A549 (cell line): ENCODE measurements at regions of chr12 and their contacts with region 1.

Region 1: GRCh38 chr12:49018261-49019119 is at the start of gene PRKAG1:
- DNase-seq: peak; percentile 98
- ATAC-seq: peak; percentile 87 to 92
- H3K4me3 ChIP-seq: peak within 1 kb of the TSS; percentile 83
- H3K27ac ChIP-seq: peak within 1 kb of the TSS; percentile 92 to 93
- H3K4me1 ChIP-seq: peaks cover 22% of the 10 kb centered on the region
- CTCF ChIP-seq: peak; percentile 59
- EP300 ChIP-seq: no peak
- POLR2A ChIP-seq: peak; percentile 77
- RAD21 ChIP-seq: peak; percentile 18 to 28; a peak in 1 of 5 replicates
- polyA plus RNA-seq, gene PRKAG1: 100 and 117 TPM in 2 replicates

Region 2: GRCh38 chr12:48957141-48958048 is 61.1 kb before region 1 on chr12 and contains the start of gene ARF3:
- CTCF ChIA-PET with region 1: interaction called, 2,584 read pairs
- POLR2A ChIA-PET with region 1: interaction called, 3 read pairs
- DNase-seq: peak; percentile 95 to 96
- ATAC-seq: peak; percentile 87 to 94
- H3K4me3 ChIP-seq: peak within 1 kb of the TSS; percentile 79
- H3K27ac ChIP-seq: peak within 1 kb of the TSS; percentile 95
- H3K4me1 ChIP-seq: peaks cover 10% of the 10 kb centered on the region
- CTCF ChIP-seq: no peak
- EP300 ChIP-seq: no peak
- POLR2A ChIP-seq: peak; percentile 68
- RAD21 ChIP-seq: no peak
- polyA plus RNA-seq, gene ARF3: 281 and 287 TPM in 2 replicates

Region 3: GRCh38 chr12:48977315-48978281 is 40.9 kb before region 1 on chr12:
- CTCF ChIA-PET with region 1: interaction called, 2,584 read pairs
- POLR2A ChIA-PET with region 1: no interaction called
- DNase-seq: peak; percentile 64 to 74
- ATAC-seq: peak; percentile 69 to 85
- H3K4me3 ChIP-seq: peak overlapping the region; percentile 42; the same call in 2 of the 3 replicates
- H3K27ac ChIP-seq: 0 out of 6 replicates have a peak overlapping the region, but pooled peaks of 1 of the 2 experiments have one; percentile 31
- H3K4me1 ChIP-seq: peaks cover 16% of the 10 kb centered on the region; the same call in 2 of the 3 replicates
- CTCF ChIP-seq: peak; percentile 70
- EP300 ChIP-seq: no peak
- POLR2A ChIP-seq: no peak
- RAD21 ChIP-seq: peak in 1 of 2 experiments; percentile 39; a peak in 3 of 5 replicates

Region 4: DNA sequence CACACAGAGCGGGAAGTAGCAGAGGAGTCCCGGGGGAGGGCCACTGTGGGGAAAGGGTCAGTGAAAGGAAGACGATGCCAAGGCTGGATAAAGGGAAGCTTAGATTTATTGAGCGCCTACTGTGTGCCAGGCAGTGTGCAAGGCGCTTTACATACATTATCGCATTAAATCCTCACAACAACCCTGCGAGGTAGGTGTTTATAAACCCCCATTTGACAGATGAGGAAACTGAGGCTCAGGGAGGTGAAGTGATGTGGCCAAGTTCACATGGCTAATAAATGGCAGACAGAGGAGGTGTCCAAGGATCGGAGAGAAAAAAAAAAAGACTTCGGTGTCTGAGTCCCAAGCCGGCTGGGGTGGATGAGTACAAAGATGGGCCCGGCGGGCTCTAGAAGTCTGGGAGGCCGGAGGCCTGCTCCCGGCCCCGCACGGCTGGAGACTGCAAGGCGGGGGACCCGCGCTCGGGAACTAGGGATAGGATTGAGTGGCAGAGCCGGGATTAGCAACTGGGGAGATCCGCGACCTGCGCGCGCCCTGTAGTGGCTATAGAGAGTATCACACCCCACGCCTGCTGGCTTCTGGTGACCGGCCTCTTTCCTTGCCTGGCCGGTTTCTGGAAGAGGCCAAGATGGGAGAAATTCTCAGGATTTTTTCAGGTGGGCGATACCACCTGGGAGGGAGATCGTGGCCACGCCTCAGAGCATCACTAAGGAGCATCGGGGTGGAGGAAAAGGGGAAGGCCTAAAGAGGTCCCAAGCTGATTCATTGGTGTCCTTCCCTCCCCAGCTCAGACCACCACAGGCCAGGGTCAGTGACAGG is 23.2 kb before region 1 on chr12:
- CTCF ChIA-PET with region 1: interaction called, 146 read pairs
- POLR2A ChIA-PET with region 1: interaction called, 9 read pairs
- DNase-seq: peak; percentile 89 to 99
- ATAC-seq: peak; percentile 65 to 76
- H3K4me3 ChIP-seq: peak overlapping the region; percentile 32
- H3K27ac ChIP-seq: peak overlapping the region; percentile 32 to 56; a peak in 3 of 6 replicates
- H3K4me1 ChIP-seq: peaks cover 18% of the 10 kb centered on the region
- CTCF ChIP-seq: peak; percentile 66
- EP300 ChIP-seq: no peak
- POLR2A ChIP-seq: no peak
- RAD21 ChIP-seq: peak; percentile 81 to 83

Region 5: DNA sequence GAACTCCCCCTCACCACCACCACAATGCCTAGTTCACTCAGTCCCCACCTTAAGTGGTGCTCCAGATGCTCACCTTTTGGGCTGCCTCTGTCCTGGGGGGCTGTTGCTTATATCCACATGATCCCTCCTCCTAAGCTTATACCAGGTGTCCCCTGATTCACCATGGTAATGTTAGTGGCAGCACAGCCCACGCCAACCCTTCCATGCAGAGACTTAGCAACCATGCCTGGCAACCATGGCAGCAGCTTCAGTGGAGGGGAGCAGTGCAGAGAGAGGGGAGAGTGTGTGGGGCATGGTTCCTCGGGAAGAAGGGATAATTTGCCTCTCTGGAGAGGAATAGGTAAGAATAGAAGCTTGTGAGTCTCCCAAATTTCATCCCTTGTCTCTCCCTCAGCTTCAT is 18.1 kb before region 1 on chr12:
- CTCF ChIA-PET with region 1: interaction called, 146 read pairs
- POLR2A ChIA-PET with region 1: interaction called, 9 read pairs
- DNase-seq: no peak
- ATAC-seq: no peak
- H3K4me3 ChIP-seq: no peak overlapping the region
- H3K27ac ChIP-seq: no peak overlapping the region; a peak in 1 of 6 replicates
- H3K4me1 ChIP-seq: peaks cover 19% of the 10 kb centered on the region
- CTCF ChIP-seq: no peak
- EP300 ChIP-seq: no peak
- POLR2A ChIP-seq: no peak
- RAD21 ChIP-seq: no peak

Region 6: DNA sequence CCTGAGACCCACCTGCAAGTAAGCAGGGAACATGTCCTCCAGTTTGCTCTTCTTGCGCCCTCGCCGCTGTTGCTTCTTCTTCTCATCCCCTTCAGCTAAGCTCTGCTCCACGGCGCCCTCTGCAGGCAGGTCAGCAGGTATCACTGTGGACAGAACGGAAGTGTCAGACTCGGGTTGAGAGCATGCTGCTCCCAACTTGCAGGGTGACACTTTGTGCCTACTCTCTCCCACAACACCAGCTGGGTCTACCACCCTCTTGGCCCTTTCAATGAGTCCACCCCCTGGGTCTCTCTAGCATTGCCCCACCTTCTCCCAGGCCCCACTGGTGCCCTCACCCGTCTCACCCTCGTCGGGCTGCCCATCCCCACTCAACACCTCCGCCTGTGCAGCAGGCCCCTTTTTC is 25.4 kb after region 1 on chr12:
- CTCF ChIA-PET with region 1: interaction called, 22 read pairs
- POLR2A ChIA-PET with region 1: no interaction called
- DNase-seq: peak; percentile 73 to 74
- ATAC-seq: peak; percentile 62 to 86; a peak in 5 of 6 replicates
- H3K4me3 ChIP-seq: no peak overlapping the region
- H3K27ac ChIP-seq: no peak overlapping the region
- H3K4me1 ChIP-seq: no peaks in the 10 kb centered on the region
- CTCF ChIP-seq: peak; percentile 55
- EP300 ChIP-seq: no peak
- POLR2A ChIP-seq: no peak
- RAD21 ChIP-seq: no peak